ENCODE measurements at regions of chr7 and their contacts with region 1.

Region 1: DNA sequence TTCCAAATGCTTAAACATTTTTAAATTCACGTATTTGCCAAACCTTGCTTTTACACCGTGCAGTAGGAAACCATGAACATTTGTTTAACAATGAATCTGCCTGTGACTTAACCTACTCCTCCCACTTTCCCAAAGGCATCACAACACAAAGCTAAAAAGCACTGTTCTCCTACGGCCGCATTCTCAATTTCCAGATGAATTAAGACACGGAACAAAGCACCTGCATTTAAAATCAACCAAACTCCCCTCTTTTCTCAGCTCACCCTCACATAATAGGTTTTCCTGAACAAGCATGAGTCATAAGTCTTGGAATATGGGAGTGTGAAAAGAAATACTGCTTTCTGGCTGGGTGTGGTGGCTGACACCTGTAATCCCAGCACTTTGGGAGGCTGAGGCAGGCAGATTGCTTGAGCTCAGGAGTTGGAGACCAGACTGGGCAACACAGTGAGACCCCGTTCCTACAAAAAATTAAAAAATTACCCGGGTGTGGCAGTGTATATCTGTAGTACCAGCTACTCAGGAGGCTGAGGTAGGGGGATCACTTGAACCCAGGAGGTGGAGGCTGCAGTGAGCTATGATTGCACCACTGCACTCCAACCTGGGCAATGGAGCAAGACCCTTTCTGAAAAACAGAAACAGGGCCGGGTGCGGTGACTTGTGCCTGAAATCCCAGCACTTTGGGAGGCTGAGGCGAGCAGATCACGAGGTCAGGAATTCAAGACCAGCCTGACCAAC is 51.7 kb upstream of the CYTH3 start:
- DNase-seq: no peak
- ATAC-seq: no peak
- H3K4me3 ChIP-seq: no peak overlapping the region
- H3K27ac ChIP-seq: no peak overlapping the region
- H3K4me1 ChIP-seq: no peaks in the 10 kb centered on the region; a peak in 1 of 5 replicates
- H3K27me3 ChIP-seq: no peaks in the 10 kb centered on the region
- CTCF ChIP-seq: no peak
- EP300 ChIP-seq: no peak
- POLR2A ChIP-seq: no peak
- RAD21 ChIP-seq: no peak

Region 2: GRCh38 chr7:6160191-6160623 is 163.9 kb before region 1 on chr7:
- CTCF ChIA-PET with region 1: interaction called, 11 read pairs
- POLR2A ChIA-PET with region 1: no interaction called
- in situ Hi-C with region 1: no loop called
- intact Hi-C with region 1: loop called (anchors 1 kb)
- DNase-seq: peak in 1 of 4 experiments; percentile 38
- ATAC-seq: peak; percentile 46
- H3K4me3 ChIP-seq: no peak overlapping the region
- H3K27ac ChIP-seq: no peak overlapping the region
- H3K4me1 ChIP-seq: peaks cover 0 to 9% of the 10 kb centered on the region in 2 experiments; a peak in 1 of 5 replicates
- H3K27me3 ChIP-seq: no peaks in the 10 kb centered on the region
- CTCF ChIP-seq: peak; percentile 36 to 43 (median 36); a peak in 5 of 6 replicates
- EP300 ChIP-seq: no peak
- POLR2A ChIP-seq: no peak
- RAD21 ChIP-seq: peak; percentile 19 to 35; a peak in 3 of 4 replicates

Region 3: GRCh38 chr7:6256677-6257535 is 67.2 kb before region 1 on chr7:
- CTCF ChIA-PET with region 1: no interaction called
- POLR2A ChIA-PET with region 1: no interaction called
- in situ Hi-C with region 1: no loop called
- intact Hi-C with region 1: loop called (anchors 5 kb)
- DNase-seq: no peak
- ATAC-seq: peak; percentile 56
- H3K4me3 ChIP-seq: no peak overlapping the region
- H3K27ac ChIP-seq: no peak overlapping the region
- H3K4me1 ChIP-seq: peaks cover 0 to 24% of the 10 kb centered on the region in 2 experiments; a peak in 4 of 5 replicates
- H3K27me3 ChIP-seq: no peaks in the 10 kb centered on the region
- CTCF ChIP-seq: no peak
- EP300 ChIP-seq: no peak
- POLR2A ChIP-seq: no peak
- RAD21 ChIP-seq: no peak

Region 4: DNA sequence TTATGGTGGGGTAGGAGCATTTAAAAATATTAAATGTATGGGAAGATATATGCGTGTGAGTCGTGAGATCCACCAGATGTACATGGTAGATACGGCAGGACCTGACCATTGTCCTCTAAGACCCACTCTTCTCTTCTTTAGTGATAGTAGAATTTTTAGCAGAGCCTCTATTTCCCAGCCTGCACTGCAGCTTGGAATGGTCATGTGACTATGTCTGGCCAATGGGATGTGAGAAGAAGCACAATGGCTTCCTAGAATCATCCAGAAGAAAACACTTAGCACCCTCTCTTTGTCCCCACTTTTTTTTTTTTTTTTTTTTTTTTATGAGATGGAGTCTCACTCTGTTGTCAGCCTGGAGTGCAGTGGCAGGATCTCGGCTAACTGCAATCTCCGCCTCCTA is 34.9 kb after region 1 on chr7:
- CTCF ChIA-PET with region 1: no interaction called
- POLR2A ChIA-PET with region 1: no interaction called
- in situ Hi-C with region 1: no loop called
- intact Hi-C with region 1: no loop called
- DNase-seq: peak; percentile 65 to 75 (median 68)
- ATAC-seq: peak; percentile 90
- H3K4me3 ChIP-seq: no peak overlapping the region
- H3K27ac ChIP-seq: no peak overlapping the region
- H3K4me1 ChIP-seq: peaks cover 0 to 2% of the 10 kb centered on the region in 2 experiments; a peak in 3 of 5 replicates
- H3K27me3 ChIP-seq: no peaks in the 10 kb centered on the region
- CTCF ChIP-seq: no peak
- EP300 ChIP-seq: no peak
- POLR2A ChIP-seq: no peak
- RAD21 ChIP-seq: no peak

Region 5: GRCh38 chr7:6435486-6436384 is 111.6 kb after region 1 on chr7:
- CTCF ChIA-PET with region 1: no interaction called
- POLR2A ChIA-PET with region 1: no interaction called
- in situ Hi-C with region 1: no loop called
- intact Hi-C with region 1: loop called (anchors 1 kb)
- DNase-seq: peak; percentile 83 to 93 (median 86)
- ATAC-seq: peak; percentile 99
- H3K4me3 ChIP-seq: no peak overlapping the region
- H3K27ac ChIP-seq: no peak overlapping the region
- H3K4me1 ChIP-seq: peaks cover 3 to 5% of the 10 kb centered on the region in 2 experiments; a peak in 2 of 5 replicates
- H3K27me3 ChIP-seq: no peaks in the 10 kb centered on the region
- CTCF ChIP-seq: peak; percentile 89 to 96 (median 96)
- EP300 ChIP-seq: no peak
- POLR2A ChIP-seq: no peak
- RAD21 ChIP-seq: peak; percentile 87 to 88